Activated naive CD4-positive, alpha-beta T cell treated with anti-CD3 and anti-CD28 coated beads, Interleukin-2, amount 10 ng/mL, durations not matched to agents 7 days and 5 days (primary cell): ENCODE measurements at regions of chr14 and their contacts with region 1.

Region 1: DNA sequence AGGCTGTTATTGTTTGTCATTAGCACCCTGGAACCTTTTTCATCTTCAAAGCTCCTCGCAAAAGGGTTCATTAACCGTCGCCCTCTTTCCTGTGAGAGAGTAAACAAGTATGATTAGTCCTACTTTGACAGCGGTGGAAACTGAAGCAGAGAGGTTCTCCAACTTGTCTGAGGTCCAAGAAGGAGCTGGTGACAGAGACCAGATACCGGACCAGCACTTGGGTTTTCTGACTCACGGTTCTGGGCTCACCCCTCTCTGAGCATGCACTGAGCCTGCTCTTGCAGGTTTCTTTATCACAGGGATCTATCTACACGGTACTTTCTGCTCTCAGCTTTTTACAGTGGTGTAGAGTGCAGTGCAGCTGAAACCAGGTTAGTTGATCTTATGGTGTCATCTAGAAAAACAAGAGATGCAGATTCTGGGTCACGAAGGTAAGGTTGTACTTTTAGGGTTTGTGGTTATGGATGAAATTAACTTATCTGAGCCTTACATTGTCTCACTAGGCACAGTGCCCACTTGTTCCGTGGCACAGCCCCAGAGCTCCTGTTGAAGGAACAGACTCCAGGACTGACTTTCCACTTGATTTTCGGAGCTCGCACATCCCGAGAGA is 62.1 kb downstream of the PPP2R5C start:
- DNase-seq: peak; percentile 80
- H3K4me3 Mint-ChIP-seq: peak overlapping the region; percentile 75
- H3K27ac Mint-ChIP-seq: peak overlapping the region; percentile 98
- H3K4me1 Mint-ChIP-seq: peaks cover 76% of the 10 kb centered on the region
- H3K27me3 Mint-ChIP-seq: no peaks in the 10 kb centered on the region

Region 2: GRCh38 chr14:101809671-101810514 is 13.7 kb before region 1 on chr14:
- CTCF ChIA-PET with region 1: interaction called, 23 read pairs
- DNase-seq: peak; percentile 93
- H3K4me3 Mint-ChIP-seq: peak overlapping the region; percentile 90
- H3K27ac Mint-ChIP-seq: peak overlapping the region; percentile 99
- H3K4me1 Mint-ChIP-seq: peaks cover 54% of the 10 kb centered on the region
- H3K27me3 Mint-ChIP-seq: no peaks in the 10 kb centered on the region

Region 3: GRCh38 chr14:101903111-101903561 is 79.5 kb after region 1 on chr14:
- CTCF ChIA-PET with region 1: no interaction called
- DNase-seq: no peak
- H3K4me3 Mint-ChIP-seq: no peak overlapping the region
- H3K27ac Mint-ChIP-seq: no peak overlapping the region
- H3K4me1 Mint-ChIP-seq: no peaks in the 10 kb centered on the region
- H3K27me3 Mint-ChIP-seq: no peaks in the 10 kb centered on the region